ENCODE measurements at regions of chr2 and their contacts with region 1.

Region 1: GRCh38 chr2:165874445-165875039 is 79.0 kb downstream of the TTC21B start:
- DNase-seq: peak; percentile 9
- H3K4me3 Mint-ChIP-seq: no peak overlapping the region
- H3K27ac Mint-ChIP-seq: no peak overlapping the region
- H3K4me1 Mint-ChIP-seq: peaks cover 34% of the 10 kb centered on the region
- H3K27me3 Mint-ChIP-seq: no peaks in the 10 kb centered on the region

Region 2: DNA sequence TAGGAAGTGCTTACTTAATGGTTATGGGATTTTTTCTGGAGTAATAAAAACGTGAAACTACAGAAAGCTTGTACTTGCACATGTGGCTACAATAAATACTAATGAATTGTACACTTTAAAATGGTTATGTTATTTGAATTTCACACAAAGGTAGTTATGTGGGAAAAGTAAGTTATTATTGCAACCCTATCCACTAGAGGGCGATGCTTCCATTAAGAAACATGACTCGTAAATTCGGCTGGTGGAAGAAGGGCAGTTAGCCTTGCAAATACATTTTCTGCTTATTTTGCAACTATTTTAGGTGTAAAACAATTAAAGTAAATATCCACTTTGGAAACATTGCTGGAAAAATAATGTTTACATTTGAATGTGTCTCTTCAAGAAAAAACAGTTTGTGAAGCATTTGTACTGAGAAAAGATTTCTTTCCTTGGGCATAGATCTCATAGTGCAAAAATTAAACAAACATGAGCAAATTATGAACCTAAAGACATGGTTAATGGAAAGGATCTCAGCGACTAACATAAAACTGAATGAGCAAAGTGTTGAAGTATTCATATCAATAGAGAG is 473.2 kb before region 1 on chr2:
- intact Hi-C with region 1: loop called (anchors 1 kb)
- DNase-seq: no peak
- H3K4me3 Mint-ChIP-seq: no peak overlapping the region
- H3K27ac Mint-ChIP-seq: no peak overlapping the region
- H3K4me1 Mint-ChIP-seq: no peaks in the 10 kb centered on the region
- H3K27me3 Mint-ChIP-seq: peaks cover 27% of the 10 kb centered on the region

Region 3: GRCh38 chr2:165743442-165743841 is 131.1 kb before region 1 on chr2:
- intact Hi-C with region 1: no loop called
- DNase-seq: no peak
- H3K4me3 Mint-ChIP-seq: no peak overlapping the region
- H3K27ac Mint-ChIP-seq: no peak overlapping the region
- H3K4me1 Mint-ChIP-seq: no peaks in the 10 kb centered on the region
- H3K27me3 Mint-ChIP-seq: no peaks in the 10 kb centered on the region

Region 4: GRCh38 chr2:165794536-165794928 is 80.0 kb before region 1 on chr2:
- intact Hi-C with region 1: loop called (anchors 1 kb)
- DNase-seq: peak; percentile 71
- H3K4me3 Mint-ChIP-seq: peak overlapping the region; percentile 89
- H3K27ac Mint-ChIP-seq: peak overlapping the region; percentile 90
- H3K4me1 Mint-ChIP-seq: peaks cover 40% of the 10 kb centered on the region
- H3K27me3 Mint-ChIP-seq: peaks cover 2% of the 10 kb centered on the region